Activated naive CD4-positive, alpha-beta T cell treated with anti-CD3 and anti-CD28 coated beads, Interleukin-2, amount 10 ng/mL, durations not matched to agents 7 days and 5 days (primary cell): ENCODE measurements at regions of chr19 and their contacts with region 1.

Region 1: GRCh38 chr19:55605207-55605636 is 225 bp upstream of the ZNF865 start:
- DNase-seq: peak; percentile 99
- H3K4me3 Mint-ChIP-seq: peak overlapping the region; percentile 93
- H3K27ac Mint-ChIP-seq: peak overlapping the region; percentile 98
- H3K4me1 Mint-ChIP-seq: peaks cover 56% of the 10 kb centered on the region
- H3K27me3 Mint-ChIP-seq: no peaks in the 10 kb centered on the region

Region 2: GRCh38 chr19:55516878-55517620 is 88.2 kb before region 1 on chr19:
- CTCF ChIA-PET with region 1: interaction called, 21 read pairs
- DNase-seq: peak; percentile 92
- H3K4me3 Mint-ChIP-seq: peak overlapping the region; percentile 63
- H3K27ac Mint-ChIP-seq: no peak overlapping the region
- H3K4me1 Mint-ChIP-seq: peaks cover 3% of the 10 kb centered on the region
- H3K27me3 Mint-ChIP-seq: peaks cover 17% of the 10 kb centered on the region

Region 3: GRCh38 chr19:55619286-55619685 is 14.1 kb after region 1 on chr19:
- CTCF ChIA-PET with region 1: interaction called, 15 read pairs
- DNase-seq: no peak
- H3K4me3 Mint-ChIP-seq: no peak overlapping the region
- H3K27ac Mint-ChIP-seq: no peak overlapping the region
- H3K4me1 Mint-ChIP-seq: peaks cover 25% of the 10 kb centered on the region
- H3K27me3 Mint-ChIP-seq: no peaks in the 10 kb centered on the region

Region 4: GRCh38 chr19:55624109-55625003 is 19.1 kb after region 1 on chr19 and contains the start of gene ZNF784:
- CTCF ChIA-PET with region 1: interaction called, 15 read pairs
- DNase-seq: peak; percentile 93
- H3K4me3 Mint-ChIP-seq: peak within 1 kb of the TSS; percentile 92
- H3K27ac Mint-ChIP-seq: peak within 1 kb of the TSS; percentile 98
- H3K4me1 Mint-ChIP-seq: peaks cover 56% of the 10 kb centered on the region
- H3K27me3 Mint-ChIP-seq: peaks cover 35% of the 10 kb centered on the region

Region 5: DNA sequence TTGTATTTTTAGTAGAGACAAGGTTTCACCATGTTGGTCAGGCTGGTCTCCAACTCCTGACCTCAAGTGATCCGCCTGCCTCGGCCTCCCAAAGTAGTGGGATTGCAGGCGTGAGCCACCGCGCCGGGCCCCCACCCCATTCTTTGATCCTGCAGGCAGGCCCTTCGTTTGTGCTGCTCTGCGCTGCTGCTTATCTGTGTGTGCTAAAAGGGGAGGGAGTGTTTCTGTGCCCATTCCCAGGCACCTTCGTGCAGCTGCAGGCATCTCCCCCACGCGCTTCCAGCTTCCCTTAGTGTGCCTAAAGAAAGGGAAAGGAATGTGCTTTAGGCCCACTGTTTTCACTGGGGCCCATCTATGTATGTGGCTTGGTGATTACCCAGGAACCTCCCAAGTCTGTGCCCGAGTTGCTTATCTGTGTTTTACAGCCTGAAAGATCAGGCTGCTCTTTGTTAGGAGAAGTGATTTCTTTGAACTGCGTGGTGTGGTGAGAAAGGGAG is 97.0 kb after region 1 on chr19:
- CTCF ChIA-PET with region 1: no interaction called
- DNase-seq: no peak
- H3K4me3 Mint-ChIP-seq: no peak overlapping the region
- H3K27ac Mint-ChIP-seq: no peak overlapping the region
- H3K4me1 Mint-ChIP-seq: no peaks in the 10 kb centered on the region
- H3K27me3 Mint-ChIP-seq: no peaks in the 10 kb centered on the region